Adrenal gland (tissue), 19 donors: ENCODE measurements at regions of chr4 and their contacts with region 1.

Region 1: GRCh38 chr4:123399627-123400358 is 3.2 kb downstream of the SPRY1 start:
- DNase-seq: peak in 1 of 7 donors; percentile 20
- H3K4me3 ChIP-seq: peak overlapping the region in 2 of 4 donors; percentile 47 to 84
- H3K27ac ChIP-seq: peak overlapping the region in 4 of 5 donors; percentile 58 to 92 (median 78)
- H3K4me1 ChIP-seq: peaks cover 0 to 3% of the 10 kb centered on the region in 2 donors
- H3K27me3 ChIP-seq: no peaks in the 10 kb centered on the region
- CTCF ChIP-seq: no peak
- POLR2A ChIP-seq: no peak

Region 2: GRCh38 chr4:123649645-123650391 is 250.0 kb after region 1 on chr4:
- intact Hi-C with region 1: loop called in 1 of 2 experiments (anchors 10 kb)
- DNase-seq: no peak
- H3K4me3 ChIP-seq: no peak overlapping the region
- H3K27ac ChIP-seq: peak overlapping the region in 2 of 5 donors; percentile 13 to 37
- H3K4me1 ChIP-seq: peaks cover 0 to 8% of the 10 kb centered on the region in 2 donors
- H3K27me3 ChIP-seq: no peaks in the 10 kb centered on the region
- CTCF ChIP-seq: no peak
- POLR2A ChIP-seq: no peak

Region 3: GRCh38 chr4:124111922-124112321 is 712.1 kb after region 1 on chr4:
- intact Hi-C with region 1: loop called in 1 of 2 experiments (anchors 10 kb)
- DNase-seq: peak in 3 of 7 donors; percentile 16 to 53 (median 29)
- H3K4me3 ChIP-seq: no peak overlapping the region
- H3K27ac ChIP-seq: peak overlapping the region in 1 of 5 donors; percentile 55
- H3K4me1 ChIP-seq: peaks cover 0 to 7% of the 10 kb centered on the region in 2 donors
- H3K27me3 ChIP-seq: no peaks in the 10 kb centered on the region
- CTCF ChIP-seq: peak; percentile 38 to 89 (median 70)
- POLR2A ChIP-seq: no peak